ENCODE measurements at regions of chr2 and their contacts with region 1.

Region 1: DNA sequence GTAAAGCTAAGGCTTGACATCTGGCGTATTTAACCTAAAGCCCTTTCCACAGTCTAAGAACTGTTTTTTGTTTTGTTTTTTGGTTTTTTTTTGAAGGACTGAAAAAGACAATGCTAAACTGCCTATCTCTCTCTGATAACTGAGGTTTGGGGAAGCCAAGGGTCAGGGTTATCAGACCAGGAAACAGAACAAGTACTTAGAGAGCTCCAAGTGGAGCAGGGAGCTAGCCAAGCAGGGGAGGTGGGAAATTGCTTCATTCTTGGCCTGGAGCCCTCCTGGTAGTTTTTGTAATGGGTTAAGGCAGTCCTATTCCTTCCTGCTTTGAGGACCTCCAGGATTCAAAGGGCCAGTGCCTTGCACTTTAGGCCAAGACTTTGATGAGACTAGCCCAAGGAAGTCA is 154.3 kb upstream of the LTBP1 start:
- DNase-seq: no peak
- H3K4me3 ChIP-seq: no peak overlapping the region
- H3K27ac ChIP-seq: no peak overlapping the region
- H3K4me1 ChIP-seq: no peaks in the 10 kb centered on the region
- H3K27me3 ChIP-seq: no peaks in the 10 kb centered on the region
- CTCF ChIP-seq: no peak
- EP300 ChIP-seq: no peak
- POLR2A ChIP-seq: no peak

Region 2: GRCh38 chr2:33395655-33396249 is 603.3 kb after region 1 on chr2:
- in situ Hi-C with region 1: loop called in 1 of 4 experiments (anchors 25 kb)
- intact Hi-C with region 1: no loop called
- DNase-seq: peak; percentile 57
- H3K4me3 ChIP-seq: no peak overlapping the region
- H3K27ac ChIP-seq: no peak overlapping the region
- H3K4me1 ChIP-seq: no peaks in the 10 kb centered on the region
- H3K27me3 ChIP-seq: no peaks in the 10 kb centered on the region
- CTCF ChIP-seq: peak; percentile 39 to 57 (median 51)
- EP300 ChIP-seq: no peak
- POLR2A ChIP-seq: no peak

Measured in transverse colon (tissue), 4 donors.